ENCODE measurements at regions of chr4 and their contacts with region 1.

Region 1: DNA sequence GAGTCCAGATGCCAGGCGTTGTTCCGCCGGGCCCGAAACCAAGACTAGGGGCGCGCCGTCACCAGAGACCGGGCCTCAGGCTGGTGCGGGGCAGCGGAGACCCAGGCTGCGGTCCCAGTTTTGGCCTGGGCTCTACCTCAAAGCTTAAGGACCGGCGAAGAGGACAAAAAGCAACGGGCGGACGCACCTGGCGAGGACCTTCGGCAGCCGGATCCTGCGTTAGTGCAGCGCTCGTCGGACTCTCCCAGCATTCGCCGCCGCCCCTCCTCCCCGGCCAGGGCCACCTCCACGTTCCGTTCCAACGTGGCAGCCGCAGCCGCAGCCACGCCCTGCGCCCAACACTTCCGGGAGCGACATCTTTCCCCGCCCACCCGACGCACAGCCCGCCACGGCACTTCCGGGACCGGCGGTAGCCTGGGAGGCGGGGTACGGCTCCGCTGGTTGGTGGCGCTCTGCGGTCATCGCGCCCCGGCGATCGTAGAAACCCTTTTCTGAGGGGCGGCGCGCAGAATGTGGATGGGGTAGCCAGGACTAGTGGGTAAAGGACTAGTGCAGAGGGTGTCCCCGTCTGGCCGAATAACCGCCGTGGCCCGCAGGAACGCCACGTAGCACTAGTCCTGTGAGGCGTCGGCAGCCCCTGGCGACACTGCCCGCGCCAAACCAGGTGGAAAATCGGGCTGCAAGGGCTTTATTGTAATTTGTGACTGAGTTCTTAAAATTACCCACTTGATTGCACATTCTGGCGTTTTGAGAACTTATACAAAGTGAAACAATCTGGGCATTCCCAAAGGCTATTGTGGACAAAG is at the start of gene SEC31A:
- DNase-seq: peak; percentile 92 to 94
- ATAC-seq: peak; percentile 93 to 95
- H3K4me3 ChIP-seq: peak within 1 kb of the TSS; percentile 85 to 96 (median 88)
- H3K27ac ChIP-seq: peak within 1 kb of the TSS; percentile 96 to 97 (median 96)
- H3K4me1 ChIP-seq: peaks cover 32 to 34% of the 10 kb centered on the region in 2 donors
- H3K27me3 ChIP-seq: no peaks in the 10 kb centered on the region
- CTCF ChIP-seq: peak in 1 of 5 experiments; percentile 22
- POLR2A ChIP-seq: peak; percentile 93
- total RNA-seq, gene SEC31A: 95.2 to 112 (median 105) TPM

Region 2: GRCh38 chr4:82462415-82462831 is 428.7 kb before region 1 on chr4:
- in situ Hi-C with region 1: loop called in 1 of 4 experiments (anchors 10 kb)
- intact Hi-C with region 1: loop called (anchors 5 kb)
- DNase-seq: peak; percentile 64 to 87
- ATAC-seq: peak; percentile 82 to 93
- H3K4me3 ChIP-seq: no peak overlapping the region
- H3K27ac ChIP-seq: no peak overlapping the region
- H3K4me1 ChIP-seq: peaks cover 0 to 5% of the 10 kb centered on the region in 2 donors
- H3K27me3 ChIP-seq: no peaks in the 10 kb centered on the region
- CTCF ChIP-seq: peak; percentile 39 to 94 (median 71)
- POLR2A ChIP-seq: no peak

Region 3: DNA sequence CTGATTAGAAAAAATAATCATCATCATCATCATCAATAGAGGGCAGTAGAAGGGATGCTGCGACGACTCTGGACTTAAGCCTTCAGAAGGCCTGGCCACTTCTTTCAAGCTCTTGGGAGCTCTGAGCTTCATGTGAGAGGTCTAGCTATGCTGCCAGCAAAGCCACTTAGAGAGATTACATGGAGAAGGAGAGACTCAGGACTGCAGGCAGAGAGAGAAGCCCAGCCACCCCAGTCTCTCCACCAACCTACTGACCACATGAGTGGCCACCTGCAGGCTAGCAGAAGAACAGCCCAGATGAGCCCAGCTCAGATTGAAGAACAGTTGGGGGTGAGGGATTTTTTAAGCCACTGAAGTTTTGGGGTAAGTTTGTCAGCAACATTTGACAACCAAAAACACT is 312.2 kb before region 1 on chr4:
- in situ Hi-C with region 1: no loop called
- intact Hi-C with region 1: no loop called
- DNase-seq: no peak
- ATAC-seq: no peak
- H3K4me3 ChIP-seq: no peak overlapping the region
- H3K27ac ChIP-seq: no peak overlapping the region
- H3K4me1 ChIP-seq: no peaks in the 10 kb centered on the region
- H3K27me3 ChIP-seq: no peaks in the 10 kb centered on the region
- CTCF ChIP-seq: no peak
- POLR2A ChIP-seq: no peak

Region 4: GRCh38 chr4:82667761-82668505 is 223.2 kb before region 1 on chr4:
- in situ Hi-C with region 1: no loop called
- intact Hi-C with region 1: no loop called
- DNase-seq: no peak
- ATAC-seq: no peak
- H3K4me3 ChIP-seq: no peak overlapping the region
- H3K27ac ChIP-seq: no peak overlapping the region
- H3K4me1 ChIP-seq: no peaks in the 10 kb centered on the region
- H3K27me3 ChIP-seq: no peaks in the 10 kb centered on the region
- CTCF ChIP-seq: no peak
- POLR2A ChIP-seq: no peak

Region 5: DNA sequence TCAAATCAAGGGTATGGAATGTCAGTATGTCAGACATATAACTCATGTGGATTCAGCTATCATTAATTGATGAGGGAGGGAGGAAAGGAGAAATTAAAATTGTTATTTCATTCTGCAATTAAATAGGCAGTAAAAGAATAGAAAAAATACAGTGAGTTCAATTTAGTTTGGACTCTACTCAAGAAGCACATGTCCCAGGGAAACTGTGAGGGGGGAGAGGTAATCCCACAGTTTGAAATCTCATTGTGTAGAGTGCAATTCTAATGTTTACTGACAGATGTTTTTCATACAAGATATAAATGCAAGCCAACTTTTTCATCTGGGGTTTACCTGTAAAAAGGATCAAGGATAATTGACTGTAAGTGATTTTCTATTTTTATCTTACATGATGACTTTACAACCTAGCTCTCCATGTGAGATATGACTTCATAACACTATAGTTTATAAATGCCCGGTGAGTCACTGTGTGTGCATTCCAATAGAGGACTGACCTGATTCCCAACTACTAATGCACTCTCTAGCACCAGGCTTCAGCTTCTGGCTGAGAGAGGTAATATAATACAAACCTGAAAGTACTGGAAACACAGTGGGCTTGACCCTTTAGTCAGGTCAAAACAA is 57.3 kb before region 1 on chr4:
- in situ Hi-C with region 1: no loop called
- intact Hi-C with region 1: loop called (anchors 5 kb)
- DNase-seq: peak; percentile 14 to 53
- ATAC-seq: peak; percentile 100
- H3K4me3 ChIP-seq: no peak overlapping the region
- H3K27ac ChIP-seq: peak overlapping the region; percentile 70 to 84 (median 80)
- H3K4me1 ChIP-seq: peaks cover 10 to 26% of the 10 kb centered on the region in 2 donors
- H3K27me3 ChIP-seq: no peaks in the 10 kb centered on the region
- CTCF ChIP-seq: no peak
- POLR2A ChIP-seq: no peak

Region 6: DNA sequence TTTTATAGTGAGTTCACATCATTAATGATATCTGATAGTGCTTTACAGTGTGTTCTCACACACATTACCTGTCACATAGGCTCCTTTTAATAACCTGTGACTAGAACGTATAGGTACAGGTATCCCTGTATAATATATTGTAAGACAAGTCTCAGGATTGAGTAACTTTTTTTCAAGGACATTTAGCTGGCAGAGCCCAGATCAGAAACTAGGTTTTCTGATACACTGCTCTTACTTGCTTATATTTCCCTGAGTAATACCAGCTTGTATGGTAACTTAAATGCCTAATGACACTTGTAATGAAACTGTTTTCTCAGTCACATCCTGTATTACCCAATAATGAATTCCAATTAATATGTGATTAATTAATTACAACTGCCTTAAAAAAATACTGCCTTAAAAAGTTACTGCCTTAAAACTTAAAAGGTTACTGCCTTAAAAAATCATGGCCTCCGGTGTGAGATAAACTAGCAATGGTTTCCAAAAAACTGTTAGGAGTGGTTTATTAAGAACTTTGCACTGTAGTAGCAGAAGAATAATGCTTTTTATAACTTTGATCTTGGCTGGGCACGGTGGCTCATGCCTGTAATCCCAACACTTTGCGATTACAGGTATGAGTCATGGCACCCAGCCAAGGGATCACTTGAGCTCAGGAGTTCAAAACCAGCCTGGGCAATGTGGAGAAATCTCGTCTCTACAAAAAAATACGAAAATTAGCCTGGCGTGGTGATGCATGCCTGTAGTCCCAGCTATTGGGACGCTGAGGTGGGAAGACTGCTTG is 155.8 kb after region 1 on chr4:
- in situ Hi-C with region 1: no loop called
- intact Hi-C with region 1: no loop called
- DNase-seq: no peak
- ATAC-seq: no peak
- H3K4me3 ChIP-seq: no peak overlapping the region
- H3K27ac ChIP-seq: peak overlapping the region in 1 of 4 donors; percentile 30
- H3K4me1 ChIP-seq: peaks cover 5 to 9% of the 10 kb centered on the region in 2 donors
- H3K27me3 ChIP-seq: no peaks in the 10 kb centered on the region
- CTCF ChIP-seq: no peak
- POLR2A ChIP-seq: no peak

Region 7: GRCh38 chr4:83548151-83548905 is 657.2 kb after region 1 on chr4:
- in situ Hi-C with region 1: no loop called
- intact Hi-C with region 1: no loop called
- DNase-seq: peak; percentile 86 to 92
- ATAC-seq: peak; percentile 84 to 85
- H3K4me3 ChIP-seq: peak overlapping the region in 1 of 4 donors; percentile 29
- H3K27ac ChIP-seq: peak overlapping the region; percentile 95 to 99 (median 98)
- H3K4me1 ChIP-seq: peaks cover 40 to 66% of the 10 kb centered on the region in 2 donors
- H3K27me3 ChIP-seq: no peaks in the 10 kb centered on the region
- CTCF ChIP-seq: no peak
- POLR2A ChIP-seq: no peak